Sigmoid colon (tissue), 7 donors: ENCODE measurements at regions of chr11 and their contacts with region 1.

Region 1: GRCh38 chr11:129279326-129280026 is 87.4 kb upstream of the ARHGAP32 start:
- DNase-seq: peak; percentile 87
- H3K4me3 ChIP-seq: peak overlapping the region; percentile 40 to 69 (median 68)
- H3K27ac ChIP-seq: peak overlapping the region in 3 of 4 donors; percentile 55 to 77 (median 74)
- H3K4me1 ChIP-seq: peaks cover 0 to 45% (median 31%) of the 10 kb centered on the region in 4 donors
- H3K27me3 ChIP-seq: no peaks in the 10 kb centered on the region
- CTCF ChIP-seq: no peak
- EP300 ChIP-seq: no peak
- POLR2A ChIP-seq: no peak

Region 2: DNA sequence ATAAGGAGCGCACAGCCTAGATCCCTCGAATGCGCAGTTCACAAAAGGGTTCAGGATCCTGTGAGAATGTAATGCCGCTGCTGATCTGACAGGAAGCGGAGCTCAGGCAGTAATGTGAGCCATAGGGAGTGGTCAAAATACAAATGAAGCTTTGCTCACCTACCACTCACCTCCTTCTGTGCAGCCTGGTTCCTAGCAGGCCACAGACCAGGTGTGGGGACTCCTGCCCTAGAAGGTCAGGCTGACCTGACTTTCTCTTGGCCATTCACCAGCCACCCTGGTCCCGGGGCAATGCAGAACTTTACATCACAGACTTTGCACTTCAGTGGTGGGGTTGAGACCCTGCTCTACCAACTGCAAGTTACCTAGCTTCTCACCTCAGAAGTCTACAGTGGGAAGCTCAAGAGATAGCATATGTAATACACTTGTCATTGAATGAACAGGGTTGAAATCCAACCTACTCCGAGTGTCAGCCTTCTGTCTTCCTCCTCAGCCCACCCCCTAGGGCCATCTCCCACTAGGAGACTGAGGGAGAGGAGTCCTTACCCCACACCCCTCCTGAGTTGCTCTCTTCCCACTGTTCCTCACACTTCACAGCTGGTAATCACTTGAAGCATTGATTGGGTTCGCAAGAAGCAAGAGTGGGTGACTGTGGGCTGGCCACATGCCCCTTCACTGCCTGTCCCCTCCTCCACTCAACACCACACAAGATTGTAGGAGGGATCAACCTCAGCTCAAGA is 410.5 kb before region 1 on chr11:
- intact Hi-C with region 1: no loop called
- DNase-seq: no peak
- H3K4me3 ChIP-seq: no peak overlapping the region
- H3K27ac ChIP-seq: no peak overlapping the region
- H3K4me1 ChIP-seq: no peaks in the 10 kb centered on the region
- H3K27me3 ChIP-seq: no peaks in the 10 kb centered on the region
- CTCF ChIP-seq: no peak
- EP300 ChIP-seq: no peak
- POLR2A ChIP-seq: no peak

Region 3: GRCh38 chr11:129117595-129118350 is 161.7 kb before region 1 on chr11:
- intact Hi-C with region 1: loop called (anchors 5 kb)
- DNase-seq: no peak
- H3K4me3 ChIP-seq: no peak overlapping the region
- H3K27ac ChIP-seq: no peak overlapping the region
- H3K4me1 ChIP-seq: peaks cover 0 to 14% (median 7%) of the 10 kb centered on the region in 4 donors
- H3K27me3 ChIP-seq: no peaks in the 10 kb centered on the region
- CTCF ChIP-seq: peak; percentile 47 to 84 (median 76)
- EP300 ChIP-seq: no peak
- POLR2A ChIP-seq: no peak

Region 4: DNA sequence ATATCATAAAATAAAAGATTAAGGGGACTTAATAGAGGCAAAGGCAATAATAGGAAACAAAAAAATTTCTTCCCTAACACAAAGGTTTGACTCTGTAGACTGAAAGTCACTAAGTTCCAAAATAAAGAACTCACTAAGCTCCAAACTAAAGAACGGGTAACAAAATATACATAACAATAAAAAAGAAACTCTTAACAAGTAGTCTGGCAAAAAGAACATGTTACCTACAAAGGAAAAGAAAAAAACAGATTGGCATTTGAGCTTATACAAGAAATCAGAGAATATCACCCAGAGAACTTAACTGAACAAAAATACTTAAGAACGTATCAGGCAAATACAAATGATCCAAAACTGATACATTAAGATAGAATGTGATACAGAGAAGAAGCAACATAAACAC is 94.9 kb before region 1 on chr11:
- intact Hi-C with region 1: no loop called
- DNase-seq: no peak
- H3K4me3 ChIP-seq: no peak overlapping the region
- H3K27ac ChIP-seq: no peak overlapping the region
- H3K4me1 ChIP-seq: peaks cover 0 to 1% (median under 1%) of the 10 kb centered on the region in 4 donors
- H3K27me3 ChIP-seq: no peaks in the 10 kb centered on the region
- CTCF ChIP-seq: no peak
- EP300 ChIP-seq: no peak
- POLR2A ChIP-seq: no peak